Activated T-helper 1 cell treated with anti-CD3 and anti-CD28 coated beads, Interleukin-12 subunit alpha, Interleukin-12 subunit beta, Interleukin-2, Interleukin-4 antibody, amounts not matched to agents 30 ng/mL and 10 ng/mL and 1 ng/mL, durations not matched to agents 14 hours and 24 hours and 36 hours (primary cell): ENCODE measurements at regions of chr1 and their contacts with region 1.

Region 1: DNA sequence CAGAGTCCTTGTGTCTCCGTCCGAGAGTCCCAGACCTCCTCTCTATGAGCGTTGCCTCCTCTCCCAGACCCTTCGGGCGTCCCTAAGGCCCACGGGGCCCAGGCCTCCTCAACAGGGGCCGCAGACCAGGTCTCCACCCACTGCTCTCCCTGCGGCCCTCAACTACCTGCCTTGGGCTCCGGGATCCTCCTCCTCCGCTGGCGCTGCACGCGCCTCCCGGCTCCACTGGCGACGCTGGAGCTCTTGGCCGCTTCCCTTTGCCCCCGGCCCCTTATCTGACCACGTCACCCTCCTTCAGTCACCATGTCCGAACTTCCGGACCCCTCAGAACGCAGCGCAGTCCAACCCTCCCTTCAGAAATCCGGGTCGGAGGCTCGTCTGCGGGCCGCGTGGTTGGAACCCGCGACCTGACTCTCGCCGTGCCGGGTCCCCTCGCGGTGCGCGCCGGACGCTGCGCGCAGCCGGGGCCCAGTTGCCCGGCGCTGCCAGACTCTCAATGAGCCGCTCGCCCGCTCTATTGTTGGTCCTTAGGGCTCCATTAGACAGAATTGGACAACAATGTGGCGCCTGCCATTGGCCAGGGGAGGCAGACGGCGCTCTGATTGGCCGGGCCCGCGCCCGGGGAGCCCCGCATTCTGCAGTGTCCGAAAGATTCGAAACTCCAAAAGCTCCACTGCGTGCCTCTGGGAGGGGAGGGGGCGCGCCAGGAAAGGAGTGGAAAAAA is at the start of gene DMRTA2:
- DNase-seq: no peak
- H3K4me3 Mint-ChIP-seq: peak within 1 kb of the TSS; percentile 77
- H3K27ac Mint-ChIP-seq: peak within 1 kb of the TSS; percentile 67
- H3K4me1 Mint-ChIP-seq: peaks cover 39% of the 10 kb centered on the region
- H3K27me3 Mint-ChIP-seq: peaks cover 71% of the 10 kb centered on the region
- total RNA-seq, gene DMRTA2: not detected in 2 replicates

Region 2: GRCh38 chr1:50098591-50099021 is 324.5 kb before region 1 on chr1:
- intact Hi-C with region 1: no loop called
- DNase-seq: no peak
- H3K4me3 Mint-ChIP-seq: no peak overlapping the region
- H3K27ac Mint-ChIP-seq: no peak overlapping the region
- H3K4me1 Mint-ChIP-seq: no peaks in the 10 kb centered on the region
- H3K27me3 Mint-ChIP-seq: no peaks in the 10 kb centered on the region

Region 3: DNA sequence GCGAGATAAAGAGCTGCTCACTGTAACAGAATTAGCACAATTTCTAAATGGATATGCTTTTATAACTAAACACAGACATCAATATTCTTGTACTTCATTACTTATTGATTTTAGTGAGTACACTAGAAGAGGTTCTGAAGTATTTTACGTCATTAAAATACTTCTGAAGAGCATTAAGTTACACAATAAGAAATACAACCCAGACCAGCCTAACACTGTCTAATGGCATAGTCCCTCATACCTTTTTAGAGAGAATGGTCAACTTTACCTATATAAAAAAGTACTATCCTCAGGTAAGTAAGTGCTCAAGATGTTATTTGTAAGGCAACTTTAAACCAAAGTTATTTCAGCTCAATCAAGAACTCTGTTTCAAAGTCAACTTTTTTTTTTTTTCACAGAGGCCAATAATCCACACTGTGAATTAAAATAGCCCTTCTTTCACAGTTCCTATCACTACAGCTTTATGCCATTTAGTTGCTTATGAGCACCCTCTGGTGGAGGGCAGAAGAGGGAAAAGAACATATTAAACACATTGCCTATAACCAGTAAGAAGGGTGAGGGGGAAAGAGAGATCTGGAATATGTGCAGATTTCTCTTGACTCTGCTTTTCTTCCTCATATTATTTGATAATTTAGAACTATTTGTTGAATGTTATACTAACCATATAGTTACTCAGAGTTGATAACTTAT is 182.2 kb after region 1 on chr1:
- intact Hi-C with region 1: loop called (anchors 5 kb)
- DNase-seq: no peak
- H3K4me3 Mint-ChIP-seq: no peak overlapping the region
- H3K27ac Mint-ChIP-seq: no peak overlapping the region
- H3K4me1 Mint-ChIP-seq: no peaks in the 10 kb centered on the region
- H3K27me3 Mint-ChIP-seq: no peaks in the 10 kb centered on the region

Region 4: DNA sequence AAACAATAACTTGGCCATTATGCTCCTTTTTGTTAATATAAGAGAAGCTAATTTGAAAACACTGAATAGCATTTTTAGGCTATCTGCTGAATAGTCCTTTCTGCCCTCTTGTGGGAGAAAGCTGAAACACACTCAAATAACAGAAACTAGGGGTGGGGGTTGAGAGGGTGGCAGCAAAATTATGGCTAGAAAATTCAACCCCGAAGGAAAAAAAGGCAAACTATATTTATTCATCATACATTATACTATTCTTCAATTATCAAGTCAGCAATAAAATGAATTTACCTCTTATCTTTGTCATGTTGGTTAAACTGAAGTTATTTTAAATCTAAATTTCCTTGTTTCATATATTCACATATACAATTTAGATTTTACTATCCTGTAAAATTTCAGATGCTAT is 281.0 kb after region 1 on chr1:
- intact Hi-C with region 1: loop called (anchors 10 kb)
- DNase-seq: no peak
- H3K4me3 Mint-ChIP-seq: no peak overlapping the region
- H3K27ac Mint-ChIP-seq: no peak overlapping the region
- H3K4me1 Mint-ChIP-seq: no peaks in the 10 kb centered on the region
- H3K27me3 Mint-ChIP-seq: no peaks in the 10 kb centered on the region